ENCODE measurements at regions of chr5 and their contacts with region 1.

Region 1: DNA sequence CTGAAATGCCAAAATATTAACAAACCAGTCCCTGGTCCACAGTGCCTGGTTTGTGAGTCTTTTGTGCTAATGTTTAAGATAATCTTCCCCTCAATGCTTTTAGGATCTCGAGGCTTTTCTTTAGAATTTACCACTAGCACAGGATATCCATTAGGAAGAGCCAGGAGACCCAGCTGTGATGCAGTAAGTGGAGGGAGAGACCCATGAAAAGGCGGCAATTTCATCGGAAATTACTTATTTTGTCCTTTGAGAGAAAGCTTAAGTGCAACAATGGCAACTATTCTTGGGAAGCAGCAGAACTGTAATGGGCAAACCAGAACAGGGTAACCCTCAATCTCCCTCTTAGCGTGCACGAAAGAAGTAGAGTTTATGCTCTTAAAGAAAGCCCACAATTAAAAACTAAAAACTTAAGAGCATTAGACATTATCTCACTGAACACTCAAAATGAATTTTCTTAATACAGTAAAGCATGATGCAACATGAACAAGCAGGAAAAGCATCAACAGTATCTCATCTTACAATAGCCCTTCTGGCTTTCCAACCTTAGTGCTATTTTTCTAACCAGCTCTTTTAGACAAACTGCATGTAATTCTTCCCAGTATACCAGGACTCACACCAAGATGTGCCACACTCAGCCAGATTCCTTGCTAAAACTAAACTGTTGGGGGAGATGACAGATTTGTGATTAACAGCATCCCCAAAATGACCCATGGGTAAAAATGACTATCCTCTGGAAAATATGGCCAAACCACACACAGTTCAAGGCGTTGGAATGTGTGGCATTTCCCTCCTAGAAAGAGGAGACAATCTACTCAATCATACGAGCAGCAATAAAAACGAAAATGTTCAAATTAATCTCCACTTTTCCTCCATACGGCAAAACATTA is 36.4 kb downstream of the PWWP2A start:
- DNase-seq: peak; percentile 61
- H3K4me3 Mint-ChIP-seq: no peak overlapping the region
- H3K27ac Mint-ChIP-seq: no peak overlapping the region
- H3K4me1 Mint-ChIP-seq: peaks cover 17% of the 10 kb centered on the region
- H3K27me3 Mint-ChIP-seq: no peaks in the 10 kb centered on the region
- CTCF ChIP-seq: no peak

Region 2: GRCh38 chr5:160158087-160158486 is 75.2 kb after region 1 on chr5:
- CTCF ChIA-PET with region 1: interaction called, 3 read pairs
- POLR2A ChIA-PET with region 1: no interaction called
- intact Hi-C with region 1: loop called (anchors 1 kb)
- DNase-seq: no peak
- H3K4me3 Mint-ChIP-seq: no peak overlapping the region
- H3K27ac Mint-ChIP-seq: no peak overlapping the region
- H3K4me1 Mint-ChIP-seq: peaks cover 5% of the 10 kb centered on the region
- H3K27me3 Mint-ChIP-seq: no peaks in the 10 kb centered on the region
- CTCF ChIP-seq: no peak

Measured in MCF 10A (cell line).